ENCODE measurements at regions of chr3 and their contacts with region 1.

Region 1: DNA sequence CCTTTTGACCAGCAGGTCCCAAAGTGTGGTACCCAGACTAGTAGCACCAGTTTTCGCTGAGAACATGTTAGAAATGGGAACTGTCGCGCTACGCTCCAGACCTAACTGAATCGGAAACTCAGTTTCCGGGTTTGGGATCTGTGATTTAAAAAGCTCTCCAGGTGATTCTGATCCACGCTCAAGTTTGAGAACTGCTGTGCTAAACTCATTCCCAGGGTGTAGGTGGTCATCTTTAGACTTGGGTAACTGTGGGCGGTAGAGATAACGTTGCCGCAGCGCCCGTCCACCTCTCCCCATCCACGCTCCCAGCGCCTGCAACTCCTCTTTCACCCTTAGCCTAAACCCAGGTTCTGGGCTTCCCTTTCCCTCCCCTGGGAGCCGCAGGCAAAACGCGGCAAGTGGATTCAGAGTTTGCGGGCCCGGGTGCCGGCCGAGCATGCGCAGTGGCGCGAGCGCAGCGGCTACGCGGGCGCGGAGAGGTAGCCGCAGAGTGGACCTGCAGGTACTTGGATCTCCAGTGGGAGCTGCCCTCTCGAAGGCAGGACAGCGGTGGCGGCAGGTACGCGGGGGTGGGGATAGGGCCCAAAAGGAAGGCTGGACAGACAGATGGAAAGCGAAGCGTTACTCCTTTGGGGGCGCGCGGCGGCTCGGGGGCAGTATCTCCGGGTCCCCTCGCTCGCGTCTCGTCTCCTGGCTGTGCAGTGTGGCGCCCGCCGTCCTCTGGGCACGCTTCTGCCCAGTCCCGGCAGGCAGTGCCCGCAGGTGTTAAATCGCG is at the start of gene PLS1:
- DNase-seq: peak; percentile 94
- H3K4me3 ChIP-seq: peak within 1 kb of the TSS; percentile 47 to 85 (median 70)
- H3K27ac ChIP-seq: peak within 1 kb of the TSS in 6 of 8 donors; percentile 2 to 70 (median 35)
- H3K4me1 ChIP-seq: peaks cover 0 to 22% (median 14%) of the 10 kb centered on the region in 6 donors
- H3K27me3 ChIP-seq: no peaks in the 10 kb centered on the region
- CTCF ChIP-seq: no peak
- POLR2A ChIP-seq: no peak
- total RNA-seq, gene PLS1: 0.91 to 3.0 (median 1.7) TPM

Region 2: GRCh38 chr3:142723968-142724681 is 128.0 kb after region 1 on chr3 and contains the start of gene TRPC1:
- intact Hi-C with region 1: loop called (anchors 10 kb)
- DNase-seq: peak; percentile 91
- H3K4me3 ChIP-seq: peak within 1 kb of the TSS; percentile 50 to 88 (median 66)
- H3K27ac ChIP-seq: peak within 1 kb of the TSS; percentile 59 to 91 (median 88)
- H3K4me1 ChIP-seq: peaks cover 0 to 22% (median 14%) of the 10 kb centered on the region in 6 donors
- H3K27me3 ChIP-seq: peaks cover 0 to 28% (median 0%) of the 10 kb centered on the region in 7 donors
- CTCF ChIP-seq: no peak
- POLR2A ChIP-seq: peak in 1 of 3 donors; percentile 58
- total RNA-seq, gene TRPC1: 5.5 to 21.8 (median 8.1) TPM

Measured in spleen (tissue), 13 donors.